Breast epithelium (tissue), 4 donors: ENCODE measurements at regions of chr11 and their contacts with region 1.

Region 1: GRCh38 chr11:131756479-131757110 is 386.2 kb downstream of the NTM start:
- DNase-seq: no peak
- H3K4me3 ChIP-seq: no peak overlapping the region
- H3K27ac ChIP-seq: no peak overlapping the region
- H3K4me1 ChIP-seq: no peaks in the 10 kb centered on the region
- H3K27me3 ChIP-seq: no peaks in the 10 kb centered on the region
- CTCF ChIP-seq: no peak
- POLR2A ChIP-seq: no peak

Region 2: GRCh38 chr11:131136486-131136885 is 620.1 kb before region 1 on chr11:
- intact Hi-C with region 1: no loop called
- DNase-seq: no peak
- H3K4me3 ChIP-seq: no peak overlapping the region
- H3K27ac ChIP-seq: no peak overlapping the region
- H3K4me1 ChIP-seq: no peaks in the 10 kb centered on the region
- H3K27me3 ChIP-seq: no peaks in the 10 kb centered on the region
- CTCF ChIP-seq: no peak
- POLR2A ChIP-seq: no peak

Region 3: DNA sequence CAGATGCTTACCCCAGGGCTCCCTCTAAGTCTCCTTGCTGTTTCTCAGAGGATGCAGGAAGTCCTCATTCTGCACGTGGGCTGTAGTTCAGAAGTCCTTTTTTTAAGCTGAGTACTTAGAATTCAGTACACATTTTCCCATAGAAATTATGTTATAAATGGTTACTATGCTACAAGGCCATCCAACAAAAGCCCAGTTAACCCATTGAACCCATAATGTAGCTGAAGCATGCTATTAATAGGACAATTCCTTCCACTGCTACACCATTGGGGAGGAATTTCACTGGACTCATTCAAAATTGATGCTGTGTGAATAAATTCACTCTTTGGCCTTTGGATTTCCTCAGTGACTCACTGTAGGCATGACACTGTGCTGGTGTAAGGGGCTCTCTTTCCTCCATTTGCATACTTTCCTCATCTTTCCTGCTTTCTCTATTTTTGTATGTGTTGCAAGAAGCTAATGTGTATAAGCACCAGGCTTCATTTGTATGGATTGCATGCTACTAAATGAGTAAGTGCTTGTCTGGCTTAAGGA is 238.2 kb before region 1 on chr11:
- intact Hi-C with region 1: loop called (anchors 5 kb)
- DNase-seq: no peak
- H3K4me3 ChIP-seq: no peak overlapping the region
- H3K27ac ChIP-seq: no peak overlapping the region
- H3K4me1 ChIP-seq: no peaks in the 10 kb centered on the region
- H3K27me3 ChIP-seq: no peaks in the 10 kb centered on the region
- CTCF ChIP-seq: no peak
- POLR2A ChIP-seq: no peak